Posterior vena cava (tissue), 2 donors: ENCODE measurements at regions of chr1 and their contacts with region 1.

Region 1: DNA sequence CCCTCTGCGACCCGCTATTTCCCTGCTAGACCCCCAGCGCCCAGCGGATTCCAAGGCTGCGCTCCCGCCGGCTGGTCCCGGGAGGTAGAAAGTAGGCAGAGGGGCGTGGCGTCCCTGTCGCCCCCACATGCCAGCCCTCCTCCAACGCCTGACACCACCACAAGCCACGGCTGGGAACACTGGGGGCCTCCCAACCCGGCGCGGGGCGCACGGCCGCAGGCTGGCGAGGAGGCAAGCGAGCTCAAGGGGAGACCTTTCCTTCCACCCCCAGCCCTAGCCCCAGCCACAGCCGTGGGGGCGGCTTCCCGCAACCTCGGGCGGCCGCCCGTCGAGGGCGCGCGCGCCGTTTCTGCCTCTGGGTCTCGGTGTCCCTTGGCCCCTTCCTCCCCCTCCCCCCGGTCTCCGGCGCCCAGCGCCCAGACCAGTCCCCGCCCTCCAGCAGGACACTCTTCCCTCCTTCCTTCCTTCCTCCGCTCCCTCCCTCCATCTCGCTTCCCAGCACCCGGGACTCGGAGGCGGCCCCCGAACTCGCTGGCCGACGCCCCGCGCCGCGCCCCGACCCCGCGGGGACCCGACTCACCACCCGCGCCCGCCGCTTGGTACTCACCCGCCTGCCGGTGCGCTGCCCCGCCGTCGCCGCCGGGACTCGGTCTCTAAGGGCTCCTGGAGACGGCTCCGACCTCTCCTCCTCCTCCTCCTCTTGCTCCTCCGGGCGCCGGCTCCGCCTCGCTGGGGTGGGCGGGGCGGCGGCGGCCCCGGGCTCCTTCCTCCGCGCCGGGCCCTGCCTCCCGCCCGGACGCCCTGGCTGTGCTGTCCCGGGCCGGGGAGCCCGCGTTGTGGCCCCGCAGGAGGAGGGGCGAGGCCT is at the start of gene GNG12:
- DNase-seq: peak; percentile 90
- total RNA-seq, gene GNG12: 165 to 166 TPM

Region 2: DNA sequence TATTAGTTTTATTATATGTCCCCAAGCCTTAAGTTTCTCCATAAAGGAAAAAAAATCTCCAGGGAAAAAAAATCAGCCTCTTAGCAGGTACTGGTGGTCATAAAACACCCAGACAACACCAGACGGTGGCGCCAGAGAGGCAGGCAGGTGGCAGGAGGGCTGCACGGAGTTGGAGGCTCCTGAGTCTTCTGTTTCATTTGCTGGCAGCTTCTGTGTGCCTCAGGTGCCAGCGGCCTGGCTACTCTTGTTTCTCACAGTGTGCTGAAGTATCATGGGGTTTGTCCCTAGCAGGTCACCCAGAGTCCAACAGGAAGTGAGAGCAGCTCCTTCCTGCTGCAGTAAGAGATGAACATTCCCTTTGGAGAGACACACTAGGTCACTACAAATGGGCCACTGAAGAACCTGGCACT is 271.3 kb before region 1 on chr1:
- intact Hi-C with region 1: loop called in 1 of 2 experiments (anchors 10 kb)
- DNase-seq: peak; percentile 96